ENCODE measurements at regions of chr2 and their contacts with region 1.

Region 1: DNA sequence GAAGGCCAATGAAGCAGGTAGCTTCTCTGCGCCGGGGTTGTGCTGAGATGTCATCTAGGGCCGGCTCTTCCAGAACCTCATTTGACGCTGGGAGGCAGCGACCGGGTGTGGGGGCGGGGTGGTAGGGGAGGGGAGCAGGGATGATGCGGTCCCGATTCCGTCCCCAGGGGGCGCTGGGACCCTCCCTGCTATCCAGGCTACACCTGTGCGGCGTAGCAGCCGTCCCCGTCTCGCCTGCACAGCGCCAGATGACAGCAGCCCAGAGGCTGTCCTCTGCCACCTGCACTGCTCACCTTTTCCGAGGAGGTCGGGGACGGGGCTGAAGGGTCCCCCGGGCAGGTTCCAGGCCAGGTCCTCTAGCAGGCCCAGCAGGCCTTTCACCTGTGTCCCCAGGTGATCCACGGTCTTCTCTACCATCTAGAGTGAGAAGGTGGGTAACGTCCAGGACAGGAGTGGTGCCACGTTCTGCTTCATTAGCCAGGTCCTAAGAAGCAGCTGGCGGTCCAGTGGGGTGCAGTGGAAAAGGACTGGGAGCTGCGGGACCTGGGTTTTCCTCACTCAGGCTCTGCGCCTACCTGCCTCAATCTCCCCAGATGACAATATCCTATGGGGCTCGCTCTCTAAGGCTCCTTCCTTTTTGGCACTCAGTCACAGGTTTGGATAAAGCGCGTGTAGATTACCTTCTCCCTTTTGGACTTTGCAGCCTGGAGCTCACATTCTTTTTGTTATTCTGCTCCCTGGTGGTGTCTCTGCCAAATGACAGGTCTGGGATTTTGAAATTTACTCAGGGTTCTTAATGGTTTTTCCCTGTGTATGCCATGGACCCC is 56.0 kb upstream of the RAB6C start:
- DNase-seq: peak; percentile 47
- H3K4me3 Mint-ChIP-seq: peak overlapping the region; percentile 30
- H3K27ac Mint-ChIP-seq: no peak overlapping the region
- H3K4me1 Mint-ChIP-seq: peaks cover 7% of the 10 kb centered on the region
- H3K27me3 Mint-ChIP-seq: peaks cover 43% of the 10 kb centered on the region
- CTCF ChIP-seq: peak; percentile 12

Region 2: DNA sequence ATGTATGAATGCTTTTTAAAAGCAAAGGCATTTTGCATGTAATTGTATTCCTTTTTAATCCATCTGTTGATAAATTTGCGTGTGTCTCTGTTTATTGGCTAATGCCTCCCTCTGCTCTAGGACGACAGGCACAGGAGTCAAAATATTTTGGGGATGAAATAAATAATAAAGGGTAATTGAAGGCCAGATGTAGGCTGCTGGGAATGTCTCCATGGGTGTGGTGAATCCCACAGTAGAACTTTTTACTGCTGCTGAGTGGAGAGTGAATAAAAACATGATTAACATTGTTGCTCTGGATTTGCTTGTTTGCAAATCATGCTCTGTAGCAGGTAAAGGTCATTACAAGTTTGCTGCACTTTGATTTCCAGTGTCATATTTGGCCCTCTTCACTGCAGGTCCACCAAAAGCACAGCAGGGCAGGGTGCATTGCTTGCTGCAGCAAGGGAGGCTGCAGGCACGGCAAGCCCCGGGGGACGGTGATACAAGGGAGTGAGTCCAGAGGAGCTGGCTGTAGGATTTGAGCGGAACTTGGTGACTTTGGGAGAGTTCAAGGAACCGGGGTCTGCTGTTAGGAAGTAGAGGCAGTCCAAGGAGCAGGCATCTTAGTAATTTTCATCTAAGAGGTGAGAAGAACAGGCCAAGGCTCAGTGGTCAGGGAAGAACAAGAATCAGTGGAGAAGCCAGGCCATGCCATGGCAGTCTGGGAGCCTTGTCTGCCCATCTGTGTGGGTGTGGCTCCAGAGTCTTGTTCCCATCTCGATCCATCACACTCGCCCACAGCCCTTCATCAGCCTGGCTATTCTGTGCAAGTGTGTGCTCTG is 145.5 kb before region 1 on chr2:
- CTCF ChIA-PET with region 1: no interaction called
- intact Hi-C with region 1: loop called (anchors 10 kb)
- DNase-seq: no peak
- H3K4me3 Mint-ChIP-seq: no peak overlapping the region
- H3K27ac Mint-ChIP-seq: no peak overlapping the region
- H3K4me1 Mint-ChIP-seq: no peaks in the 10 kb centered on the region
- H3K27me3 Mint-ChIP-seq: peaks cover 24% of the 10 kb centered on the region
- CTCF ChIP-seq: no peak

Measured in Calu3 (cell line).